AG04449 (cell line): ENCODE measurements at regions of chr1 and their contacts with region 1.

Region 1: DNA sequence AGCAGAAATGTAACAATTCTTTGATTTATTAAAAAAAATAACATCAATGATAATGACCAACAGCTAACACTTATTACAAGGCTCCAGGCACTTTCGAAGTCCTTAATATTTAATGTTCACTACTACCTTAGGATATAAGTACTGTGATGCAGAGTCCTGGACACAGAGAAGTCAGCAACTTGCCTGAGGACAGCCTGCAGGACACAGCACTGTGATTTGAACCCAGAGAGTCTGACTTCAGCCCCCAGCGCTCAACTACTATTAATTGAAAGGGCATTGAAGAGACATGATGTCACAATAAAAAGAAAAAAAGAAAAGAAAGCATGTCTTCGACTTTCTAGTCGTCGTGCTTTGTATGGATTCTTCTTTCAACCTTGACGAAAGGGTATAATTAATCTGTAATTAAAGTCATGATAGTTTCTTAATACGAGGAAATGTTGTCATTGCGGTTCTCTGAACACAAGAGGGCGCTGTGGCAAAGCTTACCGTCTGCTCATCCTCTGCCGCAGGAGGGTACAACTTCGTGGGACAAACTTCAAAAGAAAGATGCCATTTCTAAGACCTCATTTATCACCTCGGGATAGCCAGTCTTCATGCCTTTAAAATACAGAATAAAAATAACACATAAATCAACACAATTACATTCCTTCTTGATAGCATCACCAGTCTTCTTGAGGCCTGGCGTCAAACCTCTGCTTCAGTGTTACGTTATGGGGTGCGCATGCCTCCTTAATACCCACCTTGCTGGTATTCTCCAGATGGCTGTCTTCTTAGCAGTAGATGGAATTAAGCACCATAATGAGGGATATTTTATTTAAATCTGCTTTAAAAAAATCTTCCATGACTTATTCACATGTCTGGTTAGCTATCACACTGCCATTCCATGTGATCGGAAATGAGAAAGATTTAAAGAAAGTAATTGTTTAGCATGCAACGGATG is 240.1 kb downstream of the DISC1 start:
- DNase-seq: no peak
- H3K4me3 ChIP-seq: no peak overlapping the region
- CTCF ChIP-seq: peak; percentile 65

Region 2: GRCh38 chr1:231757101-231757404 is 109.6 kb before region 1 on chr1:
- CTCF ChIA-PET with region 1: interaction called, 12 read pairs
- POLR2A ChIA-PET with region 1: no interaction called
- DNase-seq: no peak
- H3K4me3 ChIP-seq: no peak overlapping the region
- CTCF ChIP-seq: no peak

Region 3: GRCh38 chr1:231844986-231845502 is 21.6 kb before region 1 on chr1:
- CTCF ChIA-PET with region 1: interaction called, 18 read pairs
- POLR2A ChIA-PET with region 1: no interaction called
- DNase-seq: no peak
- H3K4me3 ChIP-seq: no peak overlapping the region
- CTCF ChIP-seq: no peak

Region 4: GRCh38 chr1:231853588-231854207 is 13.0 kb before region 1 on chr1:
- CTCF ChIA-PET with region 1: interaction called, 20 read pairs
- POLR2A ChIA-PET with region 1: no interaction called
- DNase-seq: no peak
- H3K4me3 ChIP-seq: no peak overlapping the region
- CTCF ChIP-seq: no peak

Region 5: DNA sequence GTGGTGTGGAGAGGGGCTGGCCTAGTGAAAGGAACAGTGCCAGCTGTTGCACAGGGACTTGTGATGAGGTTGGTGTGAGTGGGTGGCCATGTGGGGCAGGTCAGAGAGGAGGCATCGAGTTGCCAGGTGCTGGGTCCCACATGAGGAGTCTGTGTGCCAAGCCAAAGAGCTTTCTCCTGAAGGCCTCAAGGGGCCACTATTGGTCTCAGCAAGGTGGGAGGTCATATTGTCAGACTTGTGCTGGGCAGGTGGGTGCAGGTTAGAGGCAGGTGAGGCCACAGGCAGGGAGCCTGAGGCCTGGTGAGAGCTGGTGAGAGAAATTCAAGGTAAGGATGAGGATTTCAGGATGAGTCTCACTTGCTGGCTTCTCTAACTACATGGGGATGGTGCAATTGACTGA is 16.7 kb after region 1 on chr1:
- CTCF ChIA-PET with region 1: interaction called, 37 read pairs
- POLR2A ChIA-PET with region 1: no interaction called
- DNase-seq: no peak
- H3K4me3 ChIP-seq: no peak overlapping the region
- CTCF ChIP-seq: no peak